ENCODE measurements at regions of chr4 and their contacts with region 1.

Region 1: DNA sequence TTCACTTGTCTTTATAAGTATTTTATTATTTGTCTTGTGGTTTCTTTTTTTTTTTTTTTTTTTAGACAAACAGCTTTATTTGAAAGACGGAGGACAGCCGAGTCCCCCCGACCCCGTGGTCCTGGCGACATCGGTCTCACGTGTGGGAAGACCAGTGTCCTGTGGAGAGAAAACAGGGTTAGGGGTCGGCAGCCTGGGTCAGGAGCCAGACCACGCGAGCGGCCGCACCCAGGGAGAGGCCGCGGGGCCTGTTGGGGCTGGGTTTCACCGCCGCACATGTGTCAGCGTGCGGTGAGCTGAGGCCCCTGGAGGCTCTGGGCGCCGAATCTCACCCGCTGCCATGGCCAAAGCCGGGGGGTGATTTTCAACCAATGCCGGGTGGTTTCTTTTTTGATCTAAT is 17.8 kb upstream of the RAB33B start:
- DNase-seq: no peak
- H3K4me3 ChIP-seq: no peak overlapping the region
- H3K27ac ChIP-seq: no peak overlapping the region
- H3K4me1 ChIP-seq: no peaks in the 10 kb centered on the region
- CTCF ChIP-seq: no peak

Region 2: GRCh38 chr4:139465922-139466321 is 29.8 kb after region 1 on chr4:
- CTCF ChIA-PET with region 1: no interaction called
- POLR2A ChIA-PET with region 1: interaction called, 3 read pairs
- intact Hi-C with region 1: loop called (anchors 1 kb)
- DNase-seq: no peak
- H3K4me3 ChIP-seq: no peak overlapping the region
- H3K27ac ChIP-seq: no peak overlapping the region
- H3K4me1 ChIP-seq: no peaks in the 10 kb centered on the region
- CTCF ChIP-seq: no peak

Measured in OCI-LY7 (cell line).